Activated T-helper 1 cell treated with anti-CD3 and anti-CD28 coated beads, Interleukin-12 subunit alpha, Interleukin-12 subunit beta, Interleukin-2, Interleukin-4 antibody, amounts not matched to agents 30 ng/mL and 10 ng/mL and 1 ng/mL, durations not matched to agents 14 hours and 24 hours and 36 hours (primary cell): ENCODE measurements at regions of chr7 and their contacts with region 1.

Region 1: DNA sequence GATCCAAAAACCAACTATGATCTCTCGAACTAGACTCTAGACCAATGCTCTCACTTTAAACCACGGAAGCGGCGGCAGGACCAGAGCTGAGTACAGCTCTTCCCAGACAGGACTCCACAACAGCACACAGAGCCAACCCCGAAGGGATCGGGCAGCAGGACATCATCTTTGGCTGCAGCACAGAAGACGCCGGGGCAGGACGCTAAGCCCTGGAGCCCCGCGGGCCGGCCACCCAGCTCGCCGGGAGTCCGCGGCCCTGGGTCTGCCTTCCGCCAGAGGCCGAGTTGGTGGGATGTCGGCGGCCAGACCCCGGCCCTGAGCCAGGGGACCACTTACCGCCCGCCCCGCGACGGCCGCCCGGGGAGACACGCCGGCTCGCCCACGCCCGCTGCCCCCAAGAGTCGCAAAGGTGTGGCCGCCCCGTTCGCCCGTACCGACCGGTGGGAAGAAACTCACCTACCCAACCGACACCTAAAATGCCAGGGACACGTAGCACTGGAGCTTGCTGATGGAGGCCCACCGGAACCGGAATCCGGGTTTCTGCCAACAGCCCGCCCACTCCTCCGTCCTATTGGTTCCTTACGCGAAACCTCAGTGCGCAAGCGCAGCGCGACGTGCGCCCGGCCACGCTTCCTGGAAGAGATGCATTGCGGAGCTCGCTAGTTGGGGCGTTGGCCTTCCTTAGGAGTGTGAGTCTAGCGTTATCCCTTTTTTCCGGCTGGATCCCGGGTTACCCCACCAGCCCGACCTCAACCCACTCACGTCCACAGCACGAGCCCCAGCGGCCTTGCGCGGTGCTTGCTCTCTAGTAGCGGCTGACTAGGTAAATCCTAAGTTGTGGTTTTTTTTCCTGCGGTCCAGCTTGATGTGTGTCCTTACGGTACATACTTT is at the start of gene SEC61G:
- DNase-seq: peak; percentile 95
- H3K4me3 Mint-ChIP-seq: peak within 1 kb of the TSS; percentile 100
- H3K27ac Mint-ChIP-seq: peak within 1 kb of the TSS; percentile 97
- H3K4me1 Mint-ChIP-seq: peaks cover 54% of the 10 kb centered on the region
- H3K27me3 Mint-ChIP-seq: peaks cover 11% of the 10 kb centered on the region
- total RNA-seq, gene SEC61G: 160 and 168 TPM in 2 replicates

Region 2: DNA sequence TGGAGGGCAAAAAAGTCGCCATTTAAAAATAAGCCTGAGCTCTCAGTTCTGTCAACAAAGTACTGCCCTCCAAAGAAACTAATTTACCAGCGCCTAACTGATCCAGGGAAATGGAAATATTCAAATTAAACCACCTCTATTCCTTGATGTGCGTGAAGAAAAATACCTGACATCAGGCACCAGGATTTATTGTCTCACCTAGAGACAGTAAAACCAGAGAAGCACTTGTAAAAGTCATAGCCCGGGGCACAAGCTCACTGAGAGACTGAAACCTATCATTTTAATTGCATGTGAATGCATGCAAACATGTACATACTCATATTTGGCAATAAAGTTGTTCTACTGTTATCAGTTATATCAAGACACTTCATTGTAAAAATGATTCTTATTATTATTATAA is 364.1 kb before region 1 on chr7:
- intact Hi-C with region 1: loop called (anchors 10 kb)
- DNase-seq: no peak
- H3K4me3 Mint-ChIP-seq: no peak overlapping the region
- H3K27ac Mint-ChIP-seq: no peak overlapping the region
- H3K4me1 Mint-ChIP-seq: no peaks in the 10 kb centered on the region
- H3K27me3 Mint-ChIP-seq: no peaks in the 10 kb centered on the region

Region 3: GRCh38 chr7:55073945-55074499 is 315.1 kb after region 1 on chr7:
- intact Hi-C with region 1: loop called (anchors 5 kb)
- DNase-seq: peak; percentile 9
- H3K4me3 Mint-ChIP-seq: no peak overlapping the region
- H3K27ac Mint-ChIP-seq: peak overlapping the region; percentile 6
- H3K4me1 Mint-ChIP-seq: peaks cover 17% of the 10 kb centered on the region
- H3K27me3 Mint-ChIP-seq: peaks cover 12% of the 10 kb centered on the region

Region 4: GRCh38 chr7:55365675-55366460 is 606.9 kb after region 1 on chr7:
- intact Hi-C with region 1: loop called (anchors 1 kb)
- DNase-seq: peak; percentile 94
- H3K4me3 Mint-ChIP-seq: peak overlapping the region; percentile 98
- H3K27ac Mint-ChIP-seq: peak overlapping the region; percentile 98
- H3K4me1 Mint-ChIP-seq: peaks cover 19% of the 10 kb centered on the region
- H3K27me3 Mint-ChIP-seq: peaks cover 8% of the 10 kb centered on the region

Region 5: GRCh38 chr7:55641273-55641691 is 882.3 kb after region 1 on chr7:
- intact Hi-C with region 1: loop called (anchors 2 kb)
- DNase-seq: peak; percentile 11
- H3K4me3 Mint-ChIP-seq: no peak overlapping the region
- H3K27ac Mint-ChIP-seq: no peak overlapping the region
- H3K4me1 Mint-ChIP-seq: peaks cover 11% of the 10 kb centered on the region
- H3K27me3 Mint-ChIP-seq: peaks cover 7% of the 10 kb centered on the region

Region 6: GRCh38 chr7:56063882-56064625 is 1305.1 kb after region 1 on chr7 and contains the start of gene SUMF2:
- intact Hi-C with region 1: loop called (anchors 1 kb)
- DNase-seq: peak; percentile 88
- H3K4me3 Mint-ChIP-seq: peak within 1 kb of the TSS; percentile 94
- H3K27ac Mint-ChIP-seq: peak within 1 kb of the TSS; percentile 87
- H3K4me1 Mint-ChIP-seq: peaks cover 46% of the 10 kb centered on the region
- H3K27me3 Mint-ChIP-seq: no peaks in the 10 kb centered on the region
- total RNA-seq, gene SUMF2: 157 and 166 TPM in 2 replicates